ENCODE measurements at regions of chrX and their contacts with region 1.

Region 1: DNA sequence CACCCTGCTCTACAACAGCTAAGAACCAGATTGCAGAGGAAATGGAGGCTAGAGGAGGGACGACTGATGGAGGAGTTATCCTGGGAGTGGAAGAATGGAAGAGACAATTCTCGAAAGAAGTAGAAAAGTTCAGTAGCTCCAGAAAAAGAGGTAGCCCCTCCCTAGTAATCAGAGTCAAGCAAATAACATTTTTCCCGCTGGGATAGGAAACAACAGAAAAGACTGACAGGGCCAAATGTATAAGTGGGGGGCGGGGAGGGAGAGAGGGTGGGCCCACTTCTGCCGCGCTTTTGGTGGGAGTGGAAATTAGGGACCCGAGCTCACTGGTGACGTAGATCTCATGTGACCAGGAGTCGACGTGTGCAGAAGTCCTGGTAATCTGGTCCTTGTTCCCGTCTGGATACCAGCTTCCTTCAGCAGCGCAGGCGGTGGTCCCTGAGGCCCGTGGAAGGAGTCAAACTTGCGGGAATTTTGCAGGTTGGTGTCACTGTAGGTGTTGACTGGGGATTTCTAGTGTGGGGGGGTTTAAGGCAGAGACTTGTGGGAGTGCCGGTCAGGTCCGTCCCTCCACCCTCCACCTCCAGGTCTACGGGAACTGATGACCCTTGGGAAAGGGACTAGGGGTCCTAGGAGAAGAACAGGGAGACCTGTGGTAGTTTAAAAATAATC is at the start of gene TCEAL9:
- DNase-seq: peak in 9 of 10 donors; percentile 36 to 71 (median 55)
- H3K4me3 ChIP-seq: peak within 1 kb of the TSS; percentile 30 to 83 (median 69)
- H3K27ac ChIP-seq: peak within 1 kb of the TSS in 58 of 59 donors; percentile 25 to 91 (median 84)
- H3K27me3 ChIP-seq: peaks cover 0 to 48% (median 6%) of the 10 kb centered on the region in 45 donors
- CTCF ChIP-seq: no peak
- total RNA-seq, gene TCEAL9: 15.2 to 59.2 (median 25.5) TPM

Region 2: DNA sequence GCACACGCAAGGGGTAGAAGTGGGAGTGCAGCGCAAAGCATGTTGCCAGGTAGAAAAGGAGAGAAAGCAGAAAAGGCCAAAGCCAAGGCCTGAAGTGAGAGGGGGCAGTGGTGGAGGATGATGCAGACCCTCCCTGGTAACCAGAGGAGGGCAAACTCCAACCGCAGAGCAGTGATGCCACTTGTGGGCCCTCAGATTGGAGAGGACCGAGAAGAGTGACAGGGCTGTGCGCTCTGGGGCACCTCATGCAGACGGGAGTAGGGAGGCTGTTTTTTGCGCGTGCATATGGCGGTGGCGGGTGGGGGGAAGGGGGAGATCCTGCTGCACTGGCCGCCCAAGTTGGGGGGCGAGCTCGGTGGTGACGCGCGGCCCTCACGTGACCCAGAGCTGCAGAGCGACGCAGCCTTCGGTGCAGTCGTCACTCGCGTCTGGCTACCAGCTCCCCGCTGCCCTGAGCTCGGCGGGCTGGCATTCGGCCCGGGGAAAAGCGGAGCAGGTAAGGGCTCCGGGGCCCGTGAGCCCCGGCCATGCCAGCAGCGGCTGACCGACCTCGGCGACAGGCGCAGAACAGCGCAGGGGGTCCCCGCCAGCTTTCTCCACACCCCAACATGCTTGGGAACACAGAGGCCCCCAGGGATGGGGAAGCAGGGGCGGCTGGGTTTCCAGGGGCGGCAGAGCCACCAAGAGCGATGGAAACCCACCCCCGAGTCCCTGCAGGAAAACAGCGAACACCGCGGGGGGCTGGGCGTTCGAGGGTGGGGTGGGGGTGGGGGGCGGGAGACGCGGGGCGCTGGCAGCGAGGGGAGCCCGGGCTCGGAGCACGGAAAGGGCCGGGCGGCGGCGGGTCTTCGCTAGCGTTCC is 20.1 kb after region 1 on chrX and contains the start of gene BEX3:
- intact Hi-C with region 1: loop called in 1 of 2 experiments (anchors 2 kb)
- DNase-seq: peak; percentile 54 to 81 (median 74)
- H3K4me3 ChIP-seq: peak within 1 kb of the TSS; percentile 39 to 84 (median 68)
- H3K27ac ChIP-seq: peak within 1 kb of the TSS; percentile 41 to 97 (median 91)
- H3K27me3 ChIP-seq: peaks cover 0 to 52% (median 15%) of the 10 kb centered on the region in 45 donors
- CTCF ChIP-seq: peak in 3 of 56 donors; percentile 8 to 17 (median 14)
- total RNA-seq, gene BEX3: 147 to 505 (median 357) TPM

Measured in dorsolateral prefrontal cortex (tissue), 120 donors.